ENCODE measurements at regions of chr4 and their contacts with region 1.

Region 1: GRCh38 chr4:142846729-142847596 is 862 bp upstream of the INPP4B start:
- DNase-seq: peak; percentile 78

Region 2: DNA sequence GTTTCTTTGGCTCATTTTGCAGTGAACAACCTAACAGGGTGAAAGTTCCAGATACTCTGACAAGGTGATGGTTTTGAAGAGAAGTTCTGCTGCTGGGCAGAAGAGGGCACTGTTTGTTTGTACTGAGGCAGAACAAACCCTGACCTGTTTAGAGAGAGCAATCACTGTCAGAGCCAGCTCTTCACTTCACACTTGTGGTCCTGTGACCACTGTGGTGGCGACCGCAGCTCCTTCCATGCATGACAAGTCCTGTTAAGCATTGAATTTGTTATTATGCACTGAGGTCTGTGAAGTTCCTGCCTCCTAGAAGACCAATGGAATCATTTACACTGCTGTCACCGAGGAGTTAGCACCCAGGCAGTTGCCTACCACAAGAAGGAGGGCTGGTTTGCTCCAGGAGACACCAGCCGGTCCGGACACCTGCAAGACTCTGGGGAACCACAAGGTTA is 1539.7 kb before region 1 on chr4:
- intact Hi-C with region 1: loop called (anchors 10 kb)
- DNase-seq: no peak

Region 3: GRCh38 chr4:142126890-142127497 is 720.0 kb before region 1 on chr4:
- intact Hi-C with region 1: loop called (anchors 5 kb)
- DNase-seq: no peak

Measured in cardiac septum (tissue), 1 donor.